ENCODE measurements at regions of chr14 and their contacts with region 1.

Region 1: DNA sequence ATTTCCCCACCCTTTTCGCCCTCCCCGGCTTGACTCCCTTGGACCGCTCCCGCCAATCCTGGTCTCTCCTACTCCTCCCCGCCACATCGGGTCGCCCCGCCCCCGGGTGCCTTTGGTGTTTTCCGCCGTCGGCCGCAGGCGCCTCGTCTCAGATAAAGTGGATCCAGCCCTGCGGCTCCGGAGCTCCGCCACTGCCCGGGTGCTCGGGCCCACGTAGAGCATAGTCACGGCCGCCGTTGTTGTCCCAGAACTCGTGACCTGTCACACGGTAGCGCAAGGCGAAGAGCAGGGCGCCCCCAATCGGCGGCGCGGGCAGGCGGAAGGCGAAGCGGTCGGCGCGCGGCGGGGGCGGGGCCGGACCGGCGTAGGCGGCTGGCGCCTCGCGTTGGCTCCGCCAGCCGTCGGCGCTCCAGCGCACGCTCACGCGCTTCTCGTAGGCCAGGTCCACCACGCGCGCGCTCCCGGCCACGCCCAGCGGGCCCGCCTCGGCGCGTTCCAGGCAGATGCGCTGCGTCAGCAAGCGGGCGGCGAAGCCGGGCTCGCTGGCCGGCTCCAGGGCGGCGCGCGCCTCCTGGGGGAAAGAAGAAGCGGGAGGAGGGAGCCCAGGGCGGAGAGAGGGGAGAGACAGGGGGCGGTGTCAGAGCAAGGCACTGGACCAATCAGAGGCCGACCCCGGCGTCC is 1.2 kb downstream of the PPP1R3E start:
- DNase-seq: peak; percentile 89 to 99 (median 97)

Region 2: DNA sequence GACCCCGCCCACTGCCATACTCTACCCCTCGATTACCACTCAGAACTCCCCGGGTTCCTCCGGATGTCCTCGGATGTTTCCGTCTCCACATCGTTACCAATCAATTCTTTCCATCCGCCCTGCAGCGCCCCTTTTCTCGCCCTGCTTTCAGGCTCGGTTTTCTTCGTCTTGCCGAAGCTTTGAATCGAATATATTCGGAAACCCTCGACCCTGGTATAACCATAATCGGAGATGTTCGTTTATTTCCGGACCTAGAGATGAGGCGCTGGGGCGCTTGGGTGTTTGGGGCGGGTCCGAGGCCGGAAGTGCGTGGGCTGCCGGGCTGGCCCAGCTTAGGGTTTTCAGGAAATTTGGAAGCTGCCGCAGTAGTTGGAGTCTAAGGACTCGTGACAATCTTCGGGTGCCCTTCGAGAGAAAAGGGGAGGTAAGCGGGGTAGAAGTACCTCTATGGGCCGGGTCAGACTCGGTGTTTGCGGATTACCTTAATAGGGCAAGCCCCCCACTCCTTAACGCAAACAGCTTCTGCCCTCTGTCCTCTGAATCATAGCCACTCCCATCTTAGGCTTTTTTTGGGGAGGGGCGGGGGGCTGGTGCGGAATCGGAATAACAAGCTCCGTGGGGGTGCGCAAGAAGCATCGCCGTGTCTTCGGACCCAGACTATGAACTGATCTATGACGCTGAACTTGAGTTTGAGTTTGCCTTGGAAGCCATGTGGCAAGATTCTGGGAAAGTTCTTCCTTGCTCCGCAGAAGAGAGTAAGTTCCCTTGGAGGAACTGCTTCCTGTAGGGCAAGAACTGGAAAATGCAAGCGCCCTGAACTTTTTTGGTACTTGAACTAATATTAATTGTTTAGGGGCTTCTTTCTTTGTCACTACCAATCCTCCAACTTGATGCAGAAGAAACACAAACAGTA is 206.0 kb before region 1 on chr14 and contains the start of gene C14orf119:
- intact Hi-C with region 1: loop called (anchors 10 kb)
- DNase-seq: peak; percentile 34 to 100 (median 100)

Region 3: GRCh38 chr14:23183479-23183878 is 117.9 kb before region 1 on chr14 and contains the start of gene SLC7A8:
- intact Hi-C with region 1: no loop called
- DNase-seq: peak; percentile 63 to 95 (median 84)

Region 4: DNA sequence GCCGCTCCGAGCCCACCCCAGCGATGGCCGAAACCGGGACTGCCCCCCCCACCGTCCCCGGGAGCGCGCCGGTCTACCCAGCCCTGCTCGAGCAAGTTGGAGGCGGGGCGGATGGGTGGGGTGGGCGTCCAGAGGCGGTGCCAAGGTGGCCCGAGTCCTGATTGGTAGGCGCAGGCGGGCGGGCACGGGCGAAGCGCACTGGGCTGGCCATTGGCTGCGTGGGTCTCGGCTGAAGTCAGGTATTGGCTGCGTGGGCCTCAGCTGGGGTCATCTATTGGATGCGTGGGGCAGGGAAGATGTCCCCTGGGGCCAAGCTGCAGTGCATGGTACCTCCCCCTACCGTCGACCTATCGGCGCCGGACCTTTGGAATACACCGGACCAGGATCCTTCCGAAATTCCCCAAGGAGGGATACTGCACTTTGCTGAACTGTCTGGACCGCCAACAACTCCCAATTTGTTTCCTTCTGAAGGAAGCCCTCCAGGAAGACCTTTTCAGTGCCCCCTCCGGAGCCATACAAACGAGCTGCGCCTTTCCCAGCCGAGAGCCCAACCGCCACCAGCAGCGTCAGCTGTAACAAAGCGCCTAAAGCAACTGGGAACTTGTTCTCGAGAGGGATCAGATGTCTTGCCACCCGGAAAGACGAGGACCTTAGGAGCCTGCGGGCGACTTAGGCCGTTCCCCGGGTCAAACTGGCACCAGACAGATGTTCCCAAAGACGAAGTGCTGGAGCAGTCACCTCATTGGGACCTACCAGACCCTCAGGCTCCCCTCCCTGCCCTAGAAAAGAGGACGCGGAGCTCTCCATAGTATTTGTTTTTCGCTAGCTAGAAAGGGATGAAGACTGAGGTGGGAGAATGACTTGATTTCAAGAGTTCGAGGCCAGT is 15.2 kb before region 1 on chr14 and contains the start of gene HOMEZ:
- intact Hi-C with region 1: loop called (anchors 1 kb)
- DNase-seq: peak; percentile 98 to 100 (median 99)

Region 5: GRCh38 chr14:23339506-23340268 is 38.3 kb after region 1 on chr14:
- intact Hi-C with region 1: no loop called
- DNase-seq: no peak

Measured in head of caudate nucleus (tissue), 42 donors.